ENCODE measurements at regions of chr9 and their contacts with region 1.

Region 1: GRCh38 chr9:23621188-23621587 is 204.9 kb downstream of the ELAVL2 start:
- DNase-seq: no peak
- ATAC-seq: no peak
- H3K4me3 ChIP-seq: no peak overlapping the region
- H3K27ac ChIP-seq: no peak overlapping the region
- H3K4me1 ChIP-seq: no peaks in the 10 kb centered on the region
- H3K27me3 ChIP-seq: no peaks in the 10 kb centered on the region
- CTCF ChIP-seq: no peak
- POLR2A ChIP-seq: no peak
- RAD21 ChIP-seq: no peak

Region 2: DNA sequence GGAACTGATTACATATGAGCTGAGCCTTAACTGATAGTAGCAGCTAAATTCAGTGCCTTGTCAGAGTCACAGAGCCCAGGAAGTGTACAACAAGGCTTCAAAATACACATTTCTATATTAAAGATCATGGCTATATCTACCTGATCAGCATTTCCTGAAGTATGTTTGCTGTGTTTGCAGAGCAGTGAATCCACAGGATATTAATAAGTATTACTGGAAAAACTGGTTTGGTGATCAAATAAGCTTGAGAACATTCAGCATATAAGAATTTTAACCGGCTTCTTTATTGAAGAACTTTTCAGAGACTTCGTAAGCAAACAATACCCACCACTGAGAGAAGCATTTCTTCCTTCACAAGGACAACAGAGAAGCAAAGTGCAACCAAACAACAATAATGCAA is 22.2 kb before region 1 on chr9:
- CTCF ChIA-PET with region 1: no interaction called
- POLR2A ChIA-PET with region 1: no interaction called
- RAD21 ChIA-PET with region 1: no interaction called
- intact Hi-C with region 1: no loop called
- DNase-seq: no peak
- ATAC-seq: no peak
- H3K4me3 ChIP-seq: no peak overlapping the region
- H3K27ac ChIP-seq: no peak overlapping the region
- H3K4me1 ChIP-seq: no peaks in the 10 kb centered on the region
- H3K27me3 ChIP-seq: no peaks in the 10 kb centered on the region
- CTCF ChIP-seq: no peak
- POLR2A ChIP-seq: no peak
- RAD21 ChIP-seq: no peak

Region 3: GRCh38 chr9:23663536-23663935 is 42.3 kb after region 1 on chr9:
- CTCF ChIA-PET with region 1: no interaction called
- POLR2A ChIA-PET with region 1: no interaction called
- RAD21 ChIA-PET with region 1: no interaction called
- intact Hi-C with region 1: no loop called
- DNase-seq: no peak
- ATAC-seq: no peak
- H3K4me3 ChIP-seq: no peak overlapping the region
- H3K27ac ChIP-seq: no peak overlapping the region
- H3K4me1 ChIP-seq: no peaks in the 10 kb centered on the region
- H3K27me3 ChIP-seq: no peaks in the 10 kb centered on the region
- CTCF ChIP-seq: no peak
- POLR2A ChIP-seq: no peak
- RAD21 ChIP-seq: no peak

Region 4: GRCh38 chr9:23702311-23702922 is 81.2 kb after region 1 on chr9:
- CTCF ChIA-PET with region 1: no interaction called
- POLR2A ChIA-PET with region 1: no interaction called
- RAD21 ChIA-PET with region 1: no interaction called
- intact Hi-C with region 1: loop called (anchors 10 kb)
- DNase-seq: no peak
- ATAC-seq: no peak
- H3K4me3 ChIP-seq: no peak overlapping the region
- H3K27ac ChIP-seq: no peak overlapping the region
- H3K4me1 ChIP-seq: no peaks in the 10 kb centered on the region
- H3K27me3 ChIP-seq: no peaks in the 10 kb centered on the region
- CTCF ChIP-seq: no peak
- POLR2A ChIP-seq: no peak
- RAD21 ChIP-seq: no peak